Endothelial cell of umbilical vein (primary cell): ENCODE measurements at regions of chr5 and their contacts with region 1.

Region 1: GRCh38 chr5:52948418-52949076 is 40.6 kb upstream of the ITGA2 start:
- DNase-seq: peak; percentile 95
- H3K4me3 ChIP-seq: no peak overlapping the region
- H3K27ac ChIP-seq: peak overlapping the region; percentile 52
- H3K4me1 ChIP-seq: peaks cover 33% of the 10 kb centered on the region
- H3K27me3 ChIP-seq: no peaks in the 10 kb centered on the region
- CTCF ChIP-seq: peak; percentile 58 to 64
- POLR2A ChIP-seq: no peak

Region 2: DNA sequence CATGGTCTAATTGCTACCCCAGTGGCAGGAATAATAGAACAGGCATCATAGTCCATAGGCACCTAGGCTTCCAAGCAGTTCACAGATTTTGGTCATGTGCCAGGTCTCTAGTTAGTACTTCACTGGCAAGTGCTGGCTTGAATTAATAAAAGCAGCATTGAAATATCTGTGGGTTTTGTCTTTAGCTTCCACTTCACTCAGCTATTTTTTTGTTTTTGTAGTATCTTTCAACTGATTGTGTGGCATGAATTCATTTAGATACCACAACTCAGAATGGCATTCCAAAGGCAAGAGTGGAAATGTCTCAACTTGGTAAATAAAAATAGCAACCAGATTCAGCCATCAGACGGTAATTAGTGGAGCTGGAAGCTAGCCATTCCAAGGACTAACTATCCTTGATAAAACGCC is 12.7 kb after region 1 on chr5:
- CTCF ChIA-PET with region 1: interaction called, 13 read pairs
- POLR2A ChIA-PET with region 1: no interaction called
- dilution Hi-C with region 1: no loop called
- intact Hi-C with region 1: no loop called
- DNase-seq: no peak
- H3K4me3 ChIP-seq: no peak overlapping the region
- H3K27ac ChIP-seq: no peak overlapping the region
- H3K4me1 ChIP-seq: no peaks in the 10 kb centered on the region
- H3K27me3 ChIP-seq: no peaks in the 10 kb centered on the region
- CTCF ChIP-seq: no peak
- POLR2A ChIP-seq: no peak

Region 3: GRCh38 chr5:53013857-53014256 is 65.3 kb after region 1 on chr5:
- CTCF ChIA-PET with region 1: no interaction called
- POLR2A ChIA-PET with region 1: no interaction called
- dilution Hi-C with region 1: no loop called
- intact Hi-C with region 1: no loop called
- DNase-seq: no peak
- H3K4me3 ChIP-seq: no peak overlapping the region
- H3K27ac ChIP-seq: no peak overlapping the region
- H3K4me1 ChIP-seq: peaks cover 2% of the 10 kb centered on the region
- H3K27me3 ChIP-seq: no peaks in the 10 kb centered on the region
- CTCF ChIP-seq: no peak
- POLR2A ChIP-seq: no peak

Region 4: GRCh38 chr5:53023969-53024368 is 75.4 kb after region 1 on chr5:
- CTCF ChIA-PET with region 1: interaction called, 24 read pairs
- POLR2A ChIA-PET with region 1: no interaction called
- dilution Hi-C with region 1: no loop called
- intact Hi-C with region 1: no loop called
- DNase-seq: peak; percentile 52
- H3K4me3 ChIP-seq: no peak overlapping the region
- H3K27ac ChIP-seq: no peak overlapping the region
- H3K4me1 ChIP-seq: peaks cover 35% of the 10 kb centered on the region
- H3K27me3 ChIP-seq: no peaks in the 10 kb centered on the region
- CTCF ChIP-seq: no peak
- POLR2A ChIP-seq: no peak

Region 5: GRCh38 chr5:53063176-53063575 is 114.6 kb after region 1 on chr5:
- CTCF ChIA-PET with region 1: interaction called, 50 read pairs
- POLR2A ChIA-PET with region 1: no interaction called
- dilution Hi-C with region 1: no loop called
- intact Hi-C with region 1: no loop called
- DNase-seq: peak; percentile 88
- H3K4me3 ChIP-seq: peak overlapping the region in 1 of 3 experiments; percentile 21
- H3K27ac ChIP-seq: peak overlapping the region; percentile 71
- H3K4me1 ChIP-seq: peaks cover 26% of the 10 kb centered on the region
- H3K27me3 ChIP-seq: no peaks in the 10 kb centered on the region
- CTCF ChIP-seq: no peak
- POLR2A ChIP-seq: no peak

Region 6: GRCh38 chr5:53095931-53096525 is 147.5 kb after region 1 on chr5:
- CTCF ChIA-PET with region 1: interaction called, 148 read pairs
- POLR2A ChIA-PET with region 1: interaction called, 3 read pairs
- dilution Hi-C with region 1: no loop called
- intact Hi-C with region 1: loop called (anchors 1 kb)
- DNase-seq: peak; percentile 85
- H3K4me3 ChIP-seq: no peak overlapping the region
- H3K27ac ChIP-seq: no peak overlapping the region
- H3K4me1 ChIP-seq: peaks cover 10% of the 10 kb centered on the region
- H3K27me3 ChIP-seq: no peaks in the 10 kb centered on the region
- CTCF ChIP-seq: peak; percentile 54 to 63
- POLR2A ChIP-seq: no peak